ENCODE measurements at regions of chr9 and their contacts with region 1.

Region 1: GRCh38 chr9:20611751-20612287 is 10.5 kb downstream of the MLLT3 start:
- DNase-seq: peak in 2 of 9 experiments; percentile 19 to 46
- ATAC-seq: peak; percentile 71
- H3K4me3 ChIP-seq: no peak overlapping the region
- H3K4me3 Mint-ChIP-seq: no peak overlapping the region
- H3K27ac ChIP-seq: no peak overlapping the region
- H3K27ac Mint-ChIP-seq: no peak overlapping the region
- H3K4me1 ChIP-seq: peaks cover 33% of the 10 kb centered on the region
- H3K4me1 Mint-ChIP-seq: peaks cover 72% of the 10 kb centered on the region
- H3K27me3 ChIP-seq: no peaks in the 10 kb centered on the region
- H3K27me3 Mint-ChIP-seq: no peaks in the 10 kb centered on the region
- CTCF ChIP-seq: peak; percentile 58

Region 2: DNA sequence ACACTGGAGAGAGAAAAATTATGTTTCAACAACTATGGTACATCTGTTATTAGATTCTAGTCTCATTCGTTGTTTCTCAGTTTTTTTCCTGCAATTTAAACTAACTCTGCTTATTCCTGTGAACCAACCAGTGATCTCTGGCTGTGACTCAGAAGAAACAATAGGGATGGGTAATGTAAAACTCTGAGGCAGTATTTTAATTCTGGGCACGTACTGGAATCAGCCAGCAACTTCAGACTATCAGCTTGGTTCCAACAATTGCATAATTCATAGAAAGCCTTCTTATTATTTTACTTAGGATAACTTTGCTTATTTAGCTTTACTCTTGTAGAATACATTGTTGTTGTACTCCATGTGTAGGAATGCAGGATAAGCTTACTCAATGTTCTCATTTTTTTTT is 18.3 kb before region 1 on chr9:
- CTCF ChIA-PET with region 1: no interaction called
- POLR2A ChIA-PET with region 1: interaction called, 6 read pairs
- intact Hi-C with region 1: loop called in 1 of 2 experiments (anchors 2 kb)
- DNase-seq: no peak
- ATAC-seq: no peak
- H3K4me3 ChIP-seq: no peak overlapping the region
- H3K4me3 Mint-ChIP-seq: no peak overlapping the region
- H3K27ac ChIP-seq: no peak overlapping the region
- H3K27ac Mint-ChIP-seq: no peak overlapping the region
- H3K4me1 ChIP-seq: peaks cover 15% of the 10 kb centered on the region
- H3K4me1 Mint-ChIP-seq: peaks cover 50% of the 10 kb centered on the region
- H3K27me3 ChIP-seq: no peaks in the 10 kb centered on the region
- H3K27me3 Mint-ChIP-seq: no peaks in the 10 kb centered on the region
- CTCF ChIP-seq: no peak